PC-3 (cell line): ENCODE measurements at regions of chr11 and their contacts with region 1.

Region 1: GRCh38 chr11:62556108-62556871 is 9.7 kb upstream of the AHNAK start:
- DNase-seq: peak; percentile 98
- ATAC-seq: peak; percentile 39
- H3K4me3 ChIP-seq: peak overlapping the region; percentile 26; the same call in 1 of the 2 replicates
- H3K27ac ChIP-seq: peak overlapping the region; percentile 94
- H3K4me1 ChIP-seq: peaks cover 98% of the 10 kb centered on the region
- H3K27me3 ChIP-seq: no peaks in the 10 kb centered on the region
- CTCF ChIP-seq: no peak

Region 2: GRCh38 chr11:61967116-61967923 is 589.0 kb before region 1 on chr11 and contains the start of gene FTH1:
- CTCF ChIA-PET with region 1: no interaction called
- POLR2A ChIA-PET with region 1: no interaction called
- intact Hi-C with region 1: loop called (anchors 10 kb)
- DNase-seq: peak; percentile 96
- ATAC-seq: peak; percentile 36
- H3K4me3 ChIP-seq: peak within 1 kb of the TSS; percentile 95
- H3K27ac ChIP-seq: peak within 1 kb of the TSS; percentile 88
- H3K4me1 ChIP-seq: peaks cover 53% of the 10 kb centered on the region
- H3K27me3 ChIP-seq: no peaks in the 10 kb centered on the region
- CTCF ChIP-seq: no peak
- total RNA-seq, gene FTH1: 1,927 and 1,937 TPM in 2 replicates

Region 3: GRCh38 chr11:62427630-62428233 is 128.6 kb before region 1 on chr11:
- CTCF ChIA-PET with region 1: interaction called, 41 read pairs
- POLR2A ChIA-PET with region 1: interaction called, 4 read pairs
- intact Hi-C with region 1: loop called (anchors 1 kb)
- DNase-seq: peak; percentile 35
- ATAC-seq: no peak
- H3K4me3 ChIP-seq: no peak overlapping the region
- H3K27ac ChIP-seq: peak overlapping the region; percentile 35
- H3K4me1 ChIP-seq: peaks cover 41% of the 10 kb centered on the region
- H3K27me3 ChIP-seq: no peaks in the 10 kb centered on the region
- CTCF ChIP-seq: no peak

Region 4: DNA sequence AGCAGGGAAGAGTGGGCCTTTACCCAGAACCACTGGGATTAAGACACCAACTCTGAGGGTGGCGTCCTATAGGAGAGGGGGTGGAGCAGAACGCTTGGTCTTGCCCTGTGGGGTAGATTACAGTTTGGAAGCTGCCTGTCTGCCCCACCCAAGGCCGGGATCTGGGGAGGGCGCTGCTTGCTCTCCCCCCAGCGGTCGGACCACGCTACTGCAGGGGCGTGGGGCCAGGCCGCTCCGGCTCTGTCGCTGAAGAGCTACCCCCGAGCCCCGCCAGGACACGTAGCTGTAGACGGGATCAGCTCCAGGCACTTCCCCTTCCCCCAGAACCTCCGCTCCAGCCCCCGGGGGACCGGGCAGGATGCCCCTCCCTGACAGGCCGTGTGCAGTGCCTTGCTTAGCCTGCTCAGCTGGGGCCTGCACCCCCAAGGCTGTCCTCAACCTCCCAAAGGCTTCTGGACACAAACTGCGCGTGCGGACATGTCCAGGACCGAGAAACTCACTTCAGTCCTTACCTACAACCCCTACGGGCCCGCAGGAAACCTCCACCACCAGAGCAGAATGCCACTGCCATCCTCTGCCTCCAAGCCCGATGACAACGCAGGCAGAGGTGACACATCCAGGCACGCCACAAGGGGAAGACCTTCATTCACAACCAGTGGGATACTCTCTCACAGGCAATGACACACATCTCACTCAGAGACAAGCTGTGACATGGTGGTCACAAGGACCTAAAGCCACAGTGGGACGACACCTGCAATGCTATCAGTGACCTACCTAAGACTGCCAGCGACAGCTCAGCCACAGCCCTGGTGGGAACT is 13.3 kb before region 1 on chr11:
- CTCF ChIA-PET with region 1: interaction called, 54 read pairs
- POLR2A ChIA-PET with region 1: interaction called, 17 read pairs
- intact Hi-C with region 1: loop called (anchors 1 kb)
- DNase-seq: peak; percentile 92
- ATAC-seq: peak; percentile 19
- H3K4me3 ChIP-seq: peak overlapping the region; percentile 96
- H3K27ac ChIP-seq: peak overlapping the region; percentile 94
- H3K4me1 ChIP-seq: peaks cover 72% of the 10 kb centered on the region
- H3K27me3 ChIP-seq: no peaks in the 10 kb centered on the region
- CTCF ChIP-seq: peak; percentile 98

Region 5: DNA sequence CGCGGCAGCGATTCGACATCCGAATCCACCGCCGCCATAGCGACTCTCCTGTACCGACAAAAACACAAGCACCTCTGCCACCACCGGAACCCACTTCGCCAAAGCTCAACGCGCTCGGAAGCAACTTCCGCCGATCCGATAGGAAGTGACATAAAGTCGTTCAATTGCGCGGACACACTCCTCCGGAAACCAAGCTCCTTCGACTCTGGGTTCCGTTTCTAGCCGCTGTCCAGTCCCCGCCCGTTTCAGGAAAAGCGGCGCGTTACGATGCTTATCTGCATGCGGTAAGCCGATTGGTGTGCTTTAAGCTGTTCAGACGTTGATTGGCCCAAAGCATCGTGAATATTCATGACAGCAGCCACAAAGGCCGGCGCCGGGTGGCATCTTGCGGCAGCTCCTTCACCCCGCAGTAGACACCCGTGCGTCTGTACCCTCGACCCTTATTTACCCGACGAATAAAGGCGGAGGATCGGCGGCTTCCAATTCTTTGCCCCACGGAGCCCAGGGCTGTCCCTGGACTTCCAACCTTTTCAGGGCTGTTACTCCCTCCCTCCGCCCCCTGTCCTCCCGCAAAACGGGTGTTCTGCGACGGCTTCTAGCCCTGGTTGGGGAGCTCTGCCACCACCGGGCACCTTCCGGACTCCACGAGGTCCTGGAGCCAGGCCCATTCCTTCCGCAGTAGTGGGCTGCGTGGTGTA is 35.3 kb after region 1 on chr11 and contains the start of gene TUT1:
- CTCF ChIA-PET with region 1: interaction called, 19 read pairs
- POLR2A ChIA-PET with region 1: interaction called, 13 read pairs
- intact Hi-C with region 1: loop called (anchors 1 kb)
- DNase-seq: peak; percentile 100
- ATAC-seq: peak; percentile 81
- H3K4me3 ChIP-seq: peak within 1 kb of the TSS; percentile 76
- H3K27ac ChIP-seq: peak within 1 kb of the TSS; percentile 69
- H3K4me1 ChIP-seq: peaks cover 25% of the 10 kb centered on the region
- H3K27me3 ChIP-seq: no peaks in the 10 kb centered on the region
- CTCF ChIP-seq: no peak
- total RNA-seq, gene TUT1: 17.8 and 20.6 TPM in 2 replicates

Region 6: DNA sequence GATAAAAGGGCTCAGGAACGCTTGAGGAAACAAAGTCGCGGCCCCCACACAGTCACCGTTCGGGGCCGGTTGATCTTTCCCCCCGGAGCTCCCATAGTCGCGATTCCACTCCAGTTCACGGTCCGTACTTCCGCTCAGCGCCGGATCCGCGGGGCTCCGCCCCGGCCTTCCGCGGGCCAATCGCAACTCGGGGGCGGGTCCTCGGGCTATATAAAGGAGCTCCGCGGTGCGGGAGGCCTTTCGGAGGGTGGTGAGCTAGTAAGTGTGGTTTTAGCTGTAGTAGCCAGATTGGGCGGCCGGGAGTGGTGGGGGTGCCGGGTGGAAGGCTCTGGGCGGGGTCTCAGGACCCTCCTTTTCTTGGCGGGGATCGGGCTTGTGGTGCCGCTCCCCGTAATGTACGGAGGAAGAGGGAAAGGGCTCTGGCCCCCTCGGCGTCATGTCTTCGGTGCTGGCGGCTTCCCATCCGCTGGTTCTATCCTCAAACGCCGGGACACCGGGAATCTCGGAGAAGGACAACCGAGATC is 108.8 kb after region 1 on chr11 and contains the starts of genes C11orf98 and CSKMT:
- CTCF ChIA-PET with region 1: no interaction called
- POLR2A ChIA-PET with region 1: interaction called, 11 read pairs
- intact Hi-C with region 1: no loop called
- DNase-seq: peak; percentile 98
- ATAC-seq: peak; percentile 87
- H3K4me3 ChIP-seq: peak within 1 kb of the TSS; percentile 98
- H3K27ac ChIP-seq: peak within 1 kb of the TSS; percentile 36
- H3K4me1 ChIP-seq: peaks cover 26% of the 10 kb centered on the region
- H3K27me3 ChIP-seq: no peaks in the 10 kb centered on the region
- CTCF ChIP-seq: no peak
- total RNA-seq, gene C11orf98: 236 and 302 TPM in 2 replicates
- total RNA-seq, gene CSKMT: 12.9 and 16.3 TPM in 2 replicates